Naive thymus-derived CD4-positive, alpha-beta T cell (primary cell): ENCODE measurements at regions of chr2 and their contacts with region 1.

Region 1: GRCh38 chr2:197310271-197310985 is at the start of gene ANKRD44:
- DNase-seq: peak; percentile 86 to 94 (median 91)
- ATAC-seq: peak; percentile 88
- H3K4me3 ChIP-seq: peak within 1 kb of the TSS; percentile 90
- H3K4me3 Mint-ChIP-seq: peak within 1 kb of the TSS; percentile 89 to 98 (median 94)
- H3K27ac ChIP-seq: peak within 1 kb of the TSS; percentile 85
- H3K27ac Mint-ChIP-seq: peak within 1 kb of the TSS; percentile 93 to 99 (median 95)
- H3K4me1 ChIP-seq: peaks cover 34 to 43% of the 10 kb centered on the region in 2 donors
- H3K4me1 Mint-ChIP-seq: peaks cover 35 to 74% (median 68%) of the 10 kb centered on the region in 7 donors
- H3K27me3 ChIP-seq: no peaks in the 10 kb centered on the region
- H3K27me3 Mint-ChIP-seq: no peaks in the 10 kb centered on the region
- total RNA-seq, gene ANKRD44: 234 to 296 (median 291) TPM

Region 2: GRCh38 chr2:196263181-196263747 is 1047.2 kb before region 1 on chr2:
- CTCF ChIA-PET with region 1: no interaction called
- POLR2A ChIA-PET with region 1: no interaction called
- intact Hi-C with region 1: loop called in 1 of 2 experiments (anchors 10 kb)
- DNase-seq: peak in 7 of 9 donors; percentile 70 to 88 (median 83)
- ATAC-seq: peak; percentile 90
- H3K4me3 ChIP-seq: peak overlapping the region; percentile 31
- H3K4me3 Mint-ChIP-seq: peak overlapping the region; percentile 63 to 90 (median 82)
- H3K27ac ChIP-seq: peak overlapping the region; percentile 87
- H3K27ac Mint-ChIP-seq: peak overlapping the region; percentile 90 to 99 (median 97)
- H3K4me1 ChIP-seq: peaks cover 53 to 82% of the 10 kb centered on the region in 2 donors
- H3K4me1 Mint-ChIP-seq: peaks cover 39 to 94% (median 89%) of the 10 kb centered on the region in 7 donors
- H3K27me3 ChIP-seq: no peaks in the 10 kb centered on the region
- H3K27me3 Mint-ChIP-seq: no peaks in the 10 kb centered on the region

Region 3: DNA sequence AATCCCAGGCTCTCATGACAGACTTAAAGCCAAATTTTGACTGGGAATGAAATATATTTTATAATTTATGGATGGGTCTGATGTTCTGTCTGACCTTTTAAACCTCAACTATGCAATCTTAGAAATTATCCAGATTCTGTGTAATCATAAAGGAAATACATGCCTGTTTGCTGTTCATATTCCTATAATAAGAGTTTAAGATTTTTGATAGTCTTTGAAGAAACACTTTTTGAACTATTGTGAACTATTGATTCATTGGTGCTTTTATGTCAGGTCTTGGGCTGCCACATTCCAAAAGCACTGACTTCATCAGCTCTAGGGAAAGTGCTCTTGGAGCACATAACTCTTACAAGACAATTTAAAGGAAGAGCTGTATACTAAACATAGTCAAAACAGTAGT is 606.7 kb before region 1 on chr2:
- CTCF ChIA-PET with region 1: no interaction called
- POLR2A ChIA-PET with region 1: no interaction called
- intact Hi-C with region 1: no loop called
- DNase-seq: no peak
- ATAC-seq: no peak
- H3K4me3 ChIP-seq: no peak overlapping the region
- H3K4me3 Mint-ChIP-seq: no peak overlapping the region
- H3K27ac ChIP-seq: no peak overlapping the region
- H3K27ac Mint-ChIP-seq: no peak overlapping the region
- H3K4me1 ChIP-seq: no peaks in the 10 kb centered on the region
- H3K4me1 Mint-ChIP-seq: peaks cover 0 to 3% (median 0%) of the 10 kb centered on the region in 7 donors
- H3K27me3 ChIP-seq: no peaks in the 10 kb centered on the region
- H3K27me3 Mint-ChIP-seq: peaks cover 0 to 4% (median 0%) of the 10 kb centered on the region in 5 donors

Region 4: GRCh38 chr2:197130318-197130717 is 180.1 kb before region 1 on chr2:
- CTCF ChIA-PET with region 1: interaction called, 3 read pairs
- POLR2A ChIA-PET with region 1: interaction called, 5 read pairs
- intact Hi-C with region 1: loop called in 1 of 2 experiments (anchors 5 kb)
- DNase-seq: peak in 7 of 9 donors; percentile 38 to 64 (median 50)
- ATAC-seq: peak; percentile 92
- H3K4me3 ChIP-seq: no peak overlapping the region
- H3K4me3 Mint-ChIP-seq: peak overlapping the region; percentile 6 to 67 (median 45)
- H3K27ac ChIP-seq: peak overlapping the region; percentile 46
- H3K27ac Mint-ChIP-seq: peak overlapping the region; percentile 32 to 95 (median 71)
- H3K4me1 ChIP-seq: peaks cover 42 to 51% of the 10 kb centered on the region in 2 donors
- H3K4me1 Mint-ChIP-seq: peaks cover 60 to 95% (median 80%) of the 10 kb centered on the region in 7 donors
- H3K27me3 ChIP-seq: no peaks in the 10 kb centered on the region
- H3K27me3 Mint-ChIP-seq: no peaks in the 10 kb centered on the region

Region 5: GRCh38 chr2:197216361-197216979 is 94.0 kb before region 1 on chr2:
- CTCF ChIA-PET with region 1: interaction called, 6 read pairs
- POLR2A ChIA-PET with region 1: interaction called, 20 read pairs
- intact Hi-C with region 1: no loop called
- DNase-seq: peak in 1 of 9 donors; percentile 54
- ATAC-seq: peak; percentile 43
- H3K4me3 ChIP-seq: peak overlapping the region; percentile 28
- H3K4me3 Mint-ChIP-seq: peak overlapping the region; percentile 63 to 86 (median 74)
- H3K27ac ChIP-seq: peak overlapping the region; percentile 60
- H3K27ac Mint-ChIP-seq: peak overlapping the region; percentile 79 to 100 (median 97)
- H3K4me1 ChIP-seq: peaks cover 76 to 81% of the 10 kb centered on the region in 2 donors
- H3K4me1 Mint-ChIP-seq: peaks cover 57 to 96% (median 89%) of the 10 kb centered on the region in 7 donors
- H3K27me3 ChIP-seq: no peaks in the 10 kb centered on the region
- H3K27me3 Mint-ChIP-seq: no peaks in the 10 kb centered on the region

Region 6: DNA sequence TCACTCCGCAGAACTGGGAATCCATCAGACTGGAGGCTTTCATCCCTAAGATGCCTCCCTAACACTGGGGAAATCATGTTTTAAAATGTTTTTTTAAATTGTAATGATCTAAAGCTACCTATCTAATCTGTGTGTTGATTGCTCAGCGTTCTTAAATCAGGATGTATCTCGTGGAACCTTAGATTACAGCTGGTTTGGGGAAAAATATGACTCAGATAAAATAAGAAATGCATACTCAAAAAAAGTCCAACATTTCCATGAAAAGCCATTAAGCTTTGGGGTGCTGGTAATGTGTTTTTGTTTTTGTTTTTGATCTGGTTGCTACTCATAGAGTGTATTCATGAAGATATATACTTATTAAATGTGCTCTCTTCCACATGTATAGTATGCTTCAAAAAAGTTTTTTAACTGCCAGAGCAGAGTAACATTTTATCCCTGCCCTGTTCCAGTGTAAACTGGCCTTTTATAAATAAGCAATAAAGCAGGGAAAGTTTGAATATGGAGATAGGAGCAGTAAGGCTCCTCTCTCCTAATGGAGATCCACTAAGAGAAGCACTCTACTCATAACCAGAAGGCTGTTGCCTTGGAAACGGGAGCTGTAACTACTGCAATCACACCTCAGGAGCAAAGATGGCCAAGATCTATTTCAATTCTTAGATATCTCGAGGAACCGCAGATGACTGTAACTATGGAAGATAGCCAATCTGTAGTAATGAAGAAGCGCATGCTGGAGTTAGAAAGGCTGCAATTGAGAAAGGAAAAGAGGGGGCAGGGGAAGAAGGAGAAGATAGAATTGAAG is 41.4 kb before region 1 on chr2:
- CTCF ChIA-PET with region 1: no interaction called
- POLR2A ChIA-PET with region 1: interaction called, 90 read pairs
- intact Hi-C with region 1: loop called (anchors 1 kb)
- DNase-seq: peak in 2 of 9 donors; percentile 42 to 61
- ATAC-seq: peak; percentile 73
- H3K4me3 ChIP-seq: no peak overlapping the region
- H3K4me3 Mint-ChIP-seq: peak overlapping the region; percentile 1 to 85 (median 58)
- H3K27ac ChIP-seq: peak overlapping the region; percentile 63
- H3K27ac Mint-ChIP-seq: peak overlapping the region; percentile 76 to 96 (median 85)
- H3K4me1 ChIP-seq: peaks cover 76 to 82% of the 10 kb centered on the region in 2 donors
- H3K4me1 Mint-ChIP-seq: peaks cover 60 to 100% (median 92%) of the 10 kb centered on the region in 7 donors
- H3K27me3 ChIP-seq: no peaks in the 10 kb centered on the region
- H3K27me3 Mint-ChIP-seq: no peaks in the 10 kb centered on the region

Region 7: GRCh38 chr2:197378494-197379307 is 68.3 kb after region 1 on chr2:
- CTCF ChIA-PET with region 1: interaction called, 7 read pairs
- POLR2A ChIA-PET with region 1: interaction called, 6 read pairs
- intact Hi-C with region 1: loop called (anchors 1 to 5 kb)
- DNase-seq: peak; percentile 26 to 72 (median 61)
- ATAC-seq: peak; percentile 83
- H3K4me3 ChIP-seq: no peak overlapping the region
- H3K4me3 Mint-ChIP-seq: peak overlapping the region in 2 of 10 donors; percentile 21 to 47
- H3K27ac ChIP-seq: no peak overlapping the region
- H3K27ac Mint-ChIP-seq: peak overlapping the region in 2 of 9 donors; percentile 45 to 75
- H3K4me1 ChIP-seq: peaks cover 0 to 6% of the 10 kb centered on the region in 2 donors
- H3K4me1 Mint-ChIP-seq: peaks cover 9 to 27% (median 16%) of the 10 kb centered on the region in 7 donors
- H3K27me3 ChIP-seq: no peaks in the 10 kb centered on the region
- H3K27me3 Mint-ChIP-seq: peaks cover 0 to 12% (median 0%) of the 10 kb centered on the region in 5 donors

Region 8: DNA sequence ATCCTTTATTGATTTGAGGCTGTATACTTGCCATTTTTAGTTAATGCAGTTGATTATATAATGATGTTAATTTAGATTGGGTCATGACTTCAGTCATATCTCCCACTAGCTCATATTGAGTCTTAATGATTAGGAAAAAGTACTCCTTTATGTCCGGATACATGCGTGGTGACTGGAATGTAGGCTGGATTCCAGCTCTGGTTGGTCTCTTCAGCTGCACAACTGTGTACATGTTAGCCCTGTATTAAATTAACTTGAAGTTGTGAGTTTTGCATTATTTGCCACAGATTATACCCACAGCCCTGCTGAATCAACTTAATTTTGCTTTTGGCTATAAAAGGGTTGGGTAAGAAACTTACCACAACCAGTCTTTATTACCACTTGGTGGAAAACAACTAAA is 228.0 kb after region 1 on chr2:
- CTCF ChIA-PET with region 1: no interaction called
- POLR2A ChIA-PET with region 1: no interaction called
- intact Hi-C with region 1: no loop called
- DNase-seq: no peak
- ATAC-seq: no peak
- H3K4me3 ChIP-seq: no peak overlapping the region
- H3K4me3 Mint-ChIP-seq: no peak overlapping the region
- H3K27ac ChIP-seq: no peak overlapping the region
- H3K27ac Mint-ChIP-seq: peak overlapping the region in 7 of 9 donors; percentile 22 to 80 (median 62)
- H3K4me1 ChIP-seq: peaks cover 0 to 5% of the 10 kb centered on the region in 2 donors
- H3K4me1 Mint-ChIP-seq: peaks cover 14 to 55% (median 44%) of the 10 kb centered on the region in 7 donors
- H3K27me3 ChIP-seq: no peaks in the 10 kb centered on the region
- H3K27me3 Mint-ChIP-seq: no peaks in the 10 kb centered on the region